PC-3 (cell line): ENCODE measurements at regions of chr7 and their contacts with region 1.

Region 1: GRCh38 chr7:80277434-80278427 is 143.1 kb downstream of the GNAI1 start:
- DNase-seq: peak; percentile 77
- ATAC-seq: peak; percentile 95
- H3K4me3 ChIP-seq: no peak overlapping the region; the same call in 1 of the 2 replicates
- H3K27ac ChIP-seq: peak overlapping the region; percentile 73
- H3K4me1 ChIP-seq: peaks cover 19% of the 10 kb centered on the region
- H3K27me3 ChIP-seq: no peaks in the 10 kb centered on the region
- CTCF ChIP-seq: no peak

Region 2: GRCh38 chr7:80060218-80060806 is 217.4 kb before region 1 on chr7:
- CTCF ChIA-PET with region 1: no interaction called
- POLR2A ChIA-PET with region 1: no interaction called
- intact Hi-C with region 1: loop called (anchors 10 kb)
- DNase-seq: peak; percentile 80
- ATAC-seq: peak; percentile 35; the same call in 1 of the 2 replicates
- H3K4me3 ChIP-seq: no peak overlapping the region
- H3K27ac ChIP-seq: no peak overlapping the region
- H3K4me1 ChIP-seq: no peaks in the 10 kb centered on the region
- H3K27me3 ChIP-seq: no peaks in the 10 kb centered on the region
- CTCF ChIP-seq: peak; percentile 68

Region 3: GRCh38 chr7:80107278-80107677 is 170.5 kb before region 1 on chr7:
- CTCF ChIA-PET with region 1: no interaction called
- POLR2A ChIA-PET with region 1: no interaction called
- intact Hi-C with region 1: no loop called
- DNase-seq: no peak
- ATAC-seq: no peak
- H3K4me3 ChIP-seq: no peak overlapping the region
- H3K27ac ChIP-seq: no peak overlapping the region
- H3K4me1 ChIP-seq: no peaks in the 10 kb centered on the region
- H3K27me3 ChIP-seq: no peaks in the 10 kb centered on the region
- CTCF ChIP-seq: no peak

Region 4: DNA sequence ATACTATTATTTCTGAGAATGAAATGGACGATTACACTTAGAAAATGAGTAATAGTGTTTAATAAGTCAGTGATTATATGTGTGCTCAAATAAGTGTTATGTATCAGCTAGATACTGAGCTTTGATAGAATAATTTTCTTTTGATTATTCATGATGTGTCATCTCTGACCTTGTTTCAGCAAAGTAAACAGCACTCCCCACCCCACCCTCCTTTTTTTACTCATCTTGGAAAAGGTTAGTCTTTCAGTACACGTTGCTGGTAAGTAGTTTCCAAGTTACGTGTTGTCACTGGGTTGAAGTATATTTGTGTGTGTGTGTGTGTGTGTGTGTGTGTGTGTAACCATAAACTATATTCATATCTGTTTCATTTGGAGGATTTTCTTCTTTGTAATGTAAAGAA is 59.0 kb before region 1 on chr7:
- CTCF ChIA-PET with region 1: interaction called, 4 read pairs
- POLR2A ChIA-PET with region 1: no interaction called
- intact Hi-C with region 1: loop called (anchors 2 kb)
- DNase-seq: peak; percentile 91
- ATAC-seq: peak; percentile 93
- H3K4me3 ChIP-seq: no peak overlapping the region
- H3K27ac ChIP-seq: peak overlapping the region; percentile 55
- H3K4me1 ChIP-seq: peaks cover 15% of the 10 kb centered on the region
- H3K27me3 ChIP-seq: no peaks in the 10 kb centered on the region
- CTCF ChIP-seq: no peak

Region 5: GRCh38 chr7:80253653-80254052 is 24.1 kb before region 1 on chr7:
- CTCF ChIA-PET with region 1: no interaction called
- POLR2A ChIA-PET with region 1: no interaction called
- intact Hi-C with region 1: loop called (anchors 1 kb)
- DNase-seq: peak; percentile 43
- ATAC-seq: peak; percentile 79
- H3K4me3 ChIP-seq: no peak overlapping the region; the same call in 1 of the 2 replicates
- H3K27ac ChIP-seq: peak overlapping the region; percentile 77
- H3K4me1 ChIP-seq: peaks cover 20% of the 10 kb centered on the region
- H3K27me3 ChIP-seq: no peaks in the 10 kb centered on the region
- CTCF ChIP-seq: no peak

Region 6: DNA sequence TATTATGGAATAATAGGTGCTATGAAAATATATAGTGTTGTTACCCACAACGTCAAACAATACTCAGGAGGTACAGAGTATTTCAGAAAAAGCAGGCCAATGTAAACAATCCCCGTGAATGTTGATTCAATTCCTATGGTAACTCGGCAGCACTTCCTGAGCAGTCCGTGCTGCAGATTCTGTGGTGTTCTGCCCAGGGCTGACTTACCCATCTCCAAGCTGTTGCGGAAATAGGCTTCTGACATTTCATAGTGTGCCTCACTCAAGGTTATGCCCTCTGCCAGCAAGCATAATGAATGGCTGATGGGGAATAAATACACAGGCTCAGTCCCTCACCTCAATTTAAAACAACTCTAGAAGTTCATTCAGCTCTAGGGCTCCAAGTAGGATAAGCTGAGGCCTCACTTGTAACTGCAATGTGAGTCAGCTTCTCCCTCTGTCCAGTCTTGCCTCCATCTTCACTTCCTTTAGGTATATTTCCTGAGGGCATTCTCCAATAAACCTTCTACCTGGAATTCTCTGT is 34.5 kb after region 1 on chr7:
- CTCF ChIA-PET with region 1: no interaction called
- POLR2A ChIA-PET with region 1: no interaction called
- intact Hi-C with region 1: loop called (anchors 1 kb)
- DNase-seq: peak; percentile 75
- ATAC-seq: peak; percentile 94
- H3K4me3 ChIP-seq: no peak overlapping the region
- H3K27ac ChIP-seq: peak overlapping the region; percentile 74
- H3K4me1 ChIP-seq: peaks cover 23% of the 10 kb centered on the region
- H3K27me3 ChIP-seq: no peaks in the 10 kb centered on the region
- CTCF ChIP-seq: no peak

Region 7: DNA sequence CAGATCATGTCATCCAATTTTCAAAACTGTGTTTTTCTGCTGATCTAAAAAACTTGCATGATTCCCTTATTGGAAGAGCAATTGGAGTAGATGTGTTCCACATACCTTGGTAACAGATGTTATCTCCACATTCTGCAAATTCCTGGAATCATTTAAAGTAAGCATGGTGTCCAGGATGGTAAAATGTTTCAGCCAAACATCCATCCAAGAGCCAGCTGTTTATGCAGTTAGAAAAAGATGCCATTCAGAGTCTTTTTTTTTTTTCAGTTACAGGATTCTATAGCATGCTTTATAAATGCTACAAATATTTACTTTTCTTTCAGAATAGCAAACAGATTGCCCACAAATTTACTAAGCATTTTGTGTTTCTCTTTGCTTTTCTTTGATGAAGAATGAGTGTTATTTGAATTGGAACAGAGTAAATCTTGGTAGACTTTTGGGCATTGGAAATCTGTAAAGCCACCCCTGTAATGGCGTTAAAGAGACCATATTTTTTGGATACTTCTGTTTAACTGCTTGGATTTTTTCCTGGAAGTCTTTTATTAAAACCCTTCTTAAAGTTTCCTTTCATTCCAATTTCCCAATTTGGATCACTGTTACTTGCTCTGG is 84.4 kb after region 1 on chr7:
- CTCF ChIA-PET with region 1: no interaction called
- POLR2A ChIA-PET with region 1: no interaction called
- intact Hi-C with region 1: loop called (anchors 1 kb)
- DNase-seq: peak; percentile 65
- ATAC-seq: peak; percentile 77
- H3K4me3 ChIP-seq: peak overlapping the region; percentile 36; the same call in 1 of the 2 replicates
- H3K27ac ChIP-seq: peak overlapping the region; percentile 95
- H3K4me1 ChIP-seq: peaks cover 29% of the 10 kb centered on the region
- H3K27me3 ChIP-seq: no peaks in the 10 kb centered on the region
- CTCF ChIP-seq: no peak

Region 8: DNA sequence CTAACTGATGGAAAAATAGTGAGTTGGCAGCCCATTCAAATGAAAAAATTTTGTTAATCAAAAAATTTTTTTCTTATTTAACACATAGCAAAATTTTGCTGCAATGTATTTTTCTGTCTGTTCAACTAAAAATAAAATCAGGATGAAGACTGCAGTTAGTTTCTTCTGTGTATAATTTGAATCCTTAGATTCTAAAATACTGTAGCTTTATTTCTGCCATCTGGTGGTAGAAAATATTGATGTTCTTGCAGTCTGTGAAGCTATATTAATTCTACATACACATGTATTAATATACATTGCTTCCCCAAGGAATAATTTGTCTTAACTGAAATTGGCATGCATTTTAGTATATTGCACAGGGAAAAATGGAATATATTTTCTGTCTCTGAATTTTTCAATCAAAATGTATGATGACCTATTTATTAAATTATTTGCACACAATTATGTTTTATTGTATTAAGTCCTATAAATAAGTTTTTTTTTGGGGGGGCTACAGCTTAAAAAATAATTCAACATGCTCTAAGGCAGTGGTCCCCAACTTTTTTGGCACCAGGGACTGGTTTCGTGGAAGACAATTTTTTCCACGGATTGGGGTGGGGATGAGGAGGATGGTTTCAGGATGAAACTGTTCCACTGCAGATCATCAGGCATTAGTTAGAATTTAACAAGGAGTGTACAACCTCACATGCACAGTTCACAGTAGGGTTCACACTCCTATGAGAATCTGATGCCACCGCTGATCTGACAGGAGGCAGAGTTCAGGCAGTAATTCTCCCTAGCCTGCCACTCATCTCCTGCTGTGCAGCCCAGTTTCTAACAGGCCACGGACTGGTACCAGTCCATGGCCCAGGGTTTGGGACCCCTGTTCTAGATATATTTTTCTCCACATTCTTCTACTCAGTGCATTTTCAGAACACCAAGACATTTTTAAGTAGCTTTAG is 114.8 kb after region 1 on chr7:
- CTCF ChIA-PET with region 1: no interaction called
- POLR2A ChIA-PET with region 1: no interaction called
- intact Hi-C with region 1: loop called (anchors 1 kb)
- DNase-seq: peak; percentile 77
- ATAC-seq: peak; percentile 56
- H3K4me3 ChIP-seq: no peak overlapping the region
- H3K27ac ChIP-seq: no peak overlapping the region
- H3K4me1 ChIP-seq: no peaks in the 10 kb centered on the region
- H3K27me3 ChIP-seq: no peaks in the 10 kb centered on the region
- CTCF ChIP-seq: peak; percentile 68